ENCODE measurements at regions of chr1 and their contacts with region 1.

Region 1: GRCh38 chr1:233295237-233295974 is at the start of gene PCNX2:
- DNase-seq: peak; percentile 25 to 69 (median 53)
- ATAC-seq: peak; percentile 87
- H3K4me3 ChIP-seq: peak within 1 kb of the TSS; percentile 78
- H3K4me3 Mint-ChIP-seq: peak within 1 kb of the TSS; percentile 79 to 97 (median 91)
- H3K27ac ChIP-seq: peak within 1 kb of the TSS; percentile 55
- H3K27ac Mint-ChIP-seq: peak within 1 kb of the TSS; percentile 51 to 91 (median 86)
- H3K4me1 ChIP-seq: peaks cover 7 to 8% of the 10 kb centered on the region in 2 donors
- H3K4me1 Mint-ChIP-seq: peaks cover 17 to 33% (median 30%) of the 10 kb centered on the region in 7 donors
- H3K27me3 ChIP-seq: no peaks in the 10 kb centered on the region
- H3K27me3 Mint-ChIP-seq: peaks cover 0 to 2% (median 0%) of the 10 kb centered on the region in 5 donors
- total RNA-seq, gene PCNX2: 43.0 to 61.8 (median 46.8) TPM

Region 2: DNA sequence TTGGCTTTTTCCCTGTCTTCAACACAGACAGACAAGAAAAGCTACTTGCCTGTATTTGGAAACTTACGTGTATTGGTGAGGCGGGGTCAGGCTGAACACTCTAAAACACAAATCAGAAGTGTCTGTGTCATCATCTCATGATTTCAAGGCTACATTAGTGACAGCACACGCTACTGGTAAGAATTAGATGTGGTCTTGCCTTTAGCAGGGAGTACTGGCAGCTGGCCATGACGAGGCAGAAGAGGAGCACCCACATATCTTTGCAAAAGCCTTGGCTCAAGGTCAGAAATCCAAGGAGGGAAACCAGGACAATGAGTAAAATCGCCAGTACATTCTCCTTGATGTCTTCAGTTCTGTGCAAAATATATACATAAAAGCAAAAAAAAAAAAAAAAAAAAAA is 77.6 kb before region 1 on chr1:
- CTCF ChIA-PET with region 1: no interaction called
- POLR2A ChIA-PET with region 1: no interaction called
- intact Hi-C with region 1: no loop called
- DNase-seq: no peak
- ATAC-seq: no peak
- H3K4me3 ChIP-seq: no peak overlapping the region
- H3K4me3 Mint-ChIP-seq: no peak overlapping the region
- H3K27ac ChIP-seq: no peak overlapping the region
- H3K27ac Mint-ChIP-seq: no peak overlapping the region
- H3K4me1 ChIP-seq: no peaks in the 10 kb centered on the region
- H3K4me1 Mint-ChIP-seq: no peaks in the 10 kb centered on the region
- H3K27me3 ChIP-seq: no peaks in the 10 kb centered on the region
- H3K27me3 Mint-ChIP-seq: no peaks in the 10 kb centered on the region

Region 3: DNA sequence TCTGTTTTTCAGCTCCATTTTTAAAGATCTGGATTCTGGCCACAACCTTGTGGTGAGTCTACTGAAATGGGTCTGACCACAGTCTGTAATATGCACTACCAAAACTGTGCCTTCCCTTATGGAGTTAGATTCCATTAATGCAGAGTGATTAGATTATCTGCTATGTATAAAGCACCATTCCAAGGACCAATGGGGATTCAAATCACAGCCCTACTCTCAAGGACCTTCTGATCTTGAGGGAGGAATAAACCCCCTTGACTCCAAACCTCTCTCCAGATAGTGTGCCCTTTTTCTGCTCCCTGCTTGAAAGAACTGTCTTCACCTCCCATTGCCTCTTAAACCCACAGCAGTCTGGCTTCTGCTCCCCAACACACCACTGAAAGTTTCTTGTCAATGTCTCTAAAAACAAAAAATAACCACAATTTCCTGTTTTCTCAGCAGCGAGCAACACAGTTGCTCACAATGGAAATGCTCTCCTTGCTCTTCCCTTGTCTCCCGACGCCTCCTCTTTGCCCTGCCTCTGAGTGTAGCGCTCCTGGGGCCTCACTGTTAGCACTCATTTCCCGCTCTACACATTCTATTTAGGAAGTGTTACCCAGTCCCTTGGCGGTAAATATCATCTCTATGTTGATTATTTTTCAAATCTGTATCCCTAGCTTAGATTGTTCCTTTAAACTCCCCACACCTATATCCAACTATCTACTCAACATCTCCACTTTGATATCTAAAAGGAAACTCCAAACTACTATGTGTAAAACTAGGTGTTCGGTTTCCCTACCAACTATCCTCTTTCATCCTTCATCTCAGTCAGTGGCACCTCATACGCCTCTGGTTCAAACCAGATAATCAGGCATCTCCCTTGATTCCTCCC is 13.5 kb before region 1 on chr1:
- CTCF ChIA-PET with region 1: no interaction called
- POLR2A ChIA-PET with region 1: interaction called, 3 read pairs
- intact Hi-C with region 1: loop called (anchors 1 kb)
- DNase-seq: peak in 6 of 9 donors; percentile 21 to 44 (median 38)
- ATAC-seq: peak; percentile 76
- H3K4me3 ChIP-seq: no peak overlapping the region
- H3K4me3 Mint-ChIP-seq: peak overlapping the region; percentile 58 to 80 (median 67)
- H3K27ac ChIP-seq: no peak overlapping the region
- H3K27ac Mint-ChIP-seq: peak overlapping the region; percentile 66 to 89 (median 76)
- H3K4me1 ChIP-seq: peaks cover 18 to 20% of the 10 kb centered on the region in 2 donors
- H3K4me1 Mint-ChIP-seq: peaks cover 24 to 53% (median 30%) of the 10 kb centered on the region in 7 donors
- H3K27me3 ChIP-seq: no peaks in the 10 kb centered on the region
- H3K27me3 Mint-ChIP-seq: no peaks in the 10 kb centered on the region

Region 4: GRCh38 chr1:233326811-233327650 is 31.6 kb after region 1 on chr1:
- CTCF ChIA-PET with region 1: no interaction called
- POLR2A ChIA-PET with region 1: no interaction called
- intact Hi-C with region 1: loop called (anchors 1 kb)
- DNase-seq: peak; percentile 61 to 79 (median 74)
- ATAC-seq: peak; percentile 93
- H3K4me3 ChIP-seq: peak overlapping the region; percentile 43
- H3K4me3 Mint-ChIP-seq: peak overlapping the region; percentile 67 to 89 (median 83)
- H3K27ac ChIP-seq: no peak overlapping the region
- H3K27ac Mint-ChIP-seq: peak overlapping the region in 4 of 9 donors; percentile 8 to 83 (median 38)
- H3K4me1 ChIP-seq: peaks cover 6 to 8% of the 10 kb centered on the region in 2 donors
- H3K4me1 Mint-ChIP-seq: peaks cover 4 to 19% (median 8%) of the 10 kb centered on the region in 7 donors
- H3K27me3 ChIP-seq: no peaks in the 10 kb centered on the region
- H3K27me3 Mint-ChIP-seq: peaks cover 4 to 52% (median 13%) of the 10 kb centered on the region in 5 donors

Region 5: DNA sequence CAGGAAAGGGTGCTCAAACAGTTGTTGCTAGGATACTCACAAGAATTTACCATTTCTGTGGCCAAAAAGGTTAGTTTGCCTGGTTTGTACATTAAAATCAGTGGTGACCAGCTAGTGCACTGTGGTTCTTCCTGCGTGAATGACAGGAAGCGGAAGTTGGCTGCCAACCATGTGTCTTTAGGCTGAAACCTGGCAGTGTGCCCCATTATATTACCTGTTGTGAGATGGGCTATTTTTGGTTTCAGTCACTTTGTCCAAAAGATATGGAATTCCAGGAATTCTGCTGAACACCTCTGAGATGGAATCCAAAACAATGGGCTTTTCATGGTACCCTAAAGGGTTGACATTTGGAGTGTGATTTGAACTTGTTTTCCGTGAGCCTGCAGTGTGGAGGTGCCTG is 45.7 kb after region 1 on chr1:
- CTCF ChIA-PET with region 1: no interaction called
- POLR2A ChIA-PET with region 1: no interaction called
- intact Hi-C with region 1: no loop called
- DNase-seq: no peak
- ATAC-seq: no peak
- H3K4me3 ChIP-seq: no peak overlapping the region
- H3K4me3 Mint-ChIP-seq: no peak overlapping the region
- H3K27ac ChIP-seq: no peak overlapping the region
- H3K27ac Mint-ChIP-seq: no peak overlapping the region
- H3K4me1 ChIP-seq: no peaks in the 10 kb centered on the region
- H3K4me1 Mint-ChIP-seq: peaks cover 0 to 2% (median 0%) of the 10 kb centered on the region in 7 donors
- H3K27me3 ChIP-seq: no peaks in the 10 kb centered on the region
- H3K27me3 Mint-ChIP-seq: peaks cover 40 to 71% (median 57%) of the 10 kb centered on the region in 5 donors